A673 (cell line): ENCODE measurements at regions of chr9 and their contacts with region 1.

Region 1: DNA sequence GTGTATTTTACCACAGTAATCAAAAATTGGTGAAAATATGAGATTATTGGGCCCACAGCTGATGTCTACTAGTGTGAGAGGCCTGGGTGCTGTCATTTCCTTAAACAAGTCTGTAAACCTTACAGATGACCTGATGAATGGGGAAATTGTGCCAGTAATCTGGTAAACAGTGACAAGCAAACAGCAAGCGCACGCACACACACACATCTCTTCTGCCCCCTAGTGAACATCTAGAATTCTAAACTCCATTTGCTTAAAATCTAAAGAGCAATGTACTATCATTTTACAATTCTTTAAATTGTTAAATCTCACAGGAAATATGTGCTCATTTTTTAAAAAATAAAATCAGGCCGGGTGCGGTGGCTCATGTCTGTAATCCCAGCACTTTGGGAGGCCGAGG is 7.5 kb upstream of the RAPGEF1 start:
- DNase-seq: peak; percentile 71
- H3K4me3 ChIP-seq: no peak overlapping the region
- H3K27ac ChIP-seq: no peak overlapping the region
- H3K4me1 ChIP-seq: no peaks in the 10 kb centered on the region
- H3K27me3 ChIP-seq: no peaks in the 10 kb centered on the region
- CTCF ChIP-seq: peak; percentile 65

Region 2: GRCh38 chr9:131590908-131591844 is 156.2 kb before region 1 on chr9:
- CTCF ChIA-PET with region 1: interaction called, 4 read pairs
- POLR2A ChIA-PET with region 1: no interaction called
- intact Hi-C with region 1: loop called (anchors 2 kb)
- DNase-seq: peak; percentile 75
- H3K4me3 ChIP-seq: no peak overlapping the region
- H3K27ac ChIP-seq: no peak overlapping the region
- H3K4me1 ChIP-seq: no peaks in the 10 kb centered on the region
- H3K27me3 ChIP-seq: no peaks in the 10 kb centered on the region
- CTCF ChIP-seq: peak; percentile 73

Region 3: GRCh38 chr9:131697097-131697496 is 50.3 kb before region 1 on chr9:
- CTCF ChIA-PET with region 1: no interaction called
- POLR2A ChIA-PET with region 1: no interaction called
- intact Hi-C with region 1: no loop called
- DNase-seq: no peak
- H3K4me3 ChIP-seq: no peak overlapping the region
- H3K27ac ChIP-seq: no peak overlapping the region
- H3K4me1 ChIP-seq: peaks cover 18% of the 10 kb centered on the region
- H3K27me3 ChIP-seq: no peaks in the 10 kb centered on the region
- CTCF ChIP-seq: no peak